ENCODE measurements at regions of chr17 and their contacts with region 1.

Region 1: GRCh38 chr17:28227316-28228125 is 91.5 kb upstream of the TMEM97 start:
- DNase-seq: peak in 1 of 4 experiments; percentile 25
- ATAC-seq: no peak
- H3K4me3 ChIP-seq: no peak overlapping the region
- H3K27ac ChIP-seq: no peak overlapping the region
- H3K4me1 ChIP-seq: peaks cover 14 to 43% of the 10 kb centered on the region in 2 experiments; a peak in 4 of 5 replicates
- H3K27me3 ChIP-seq: no peaks in the 10 kb centered on the region; a peak in 1 of 5 replicates
- CTCF ChIP-seq: no peak
- EP300 ChIP-seq: no peak
- POLR2A ChIP-seq: no peak
- RAD21 ChIP-seq: no peak

Region 2: DNA sequence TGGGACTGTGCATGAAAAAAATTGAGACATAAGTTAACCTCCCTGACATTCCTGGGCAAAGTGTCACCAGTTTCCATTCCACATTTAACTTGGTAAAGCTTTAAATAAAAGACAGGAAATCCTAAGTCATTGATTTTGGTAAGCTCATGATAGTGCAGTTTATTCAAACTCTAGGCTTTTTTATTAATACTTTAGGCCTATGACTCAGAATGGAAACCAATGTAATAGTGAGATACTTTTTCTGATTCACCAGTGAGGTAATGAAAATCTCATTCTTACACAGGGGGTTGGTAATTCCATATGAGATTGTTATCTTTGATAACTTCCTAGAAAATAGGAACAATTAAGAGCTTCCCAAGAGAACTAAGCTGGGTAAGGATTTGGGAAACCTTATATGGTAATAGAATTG is 94.0 kb before region 1 on chr17:
- CTCF ChIA-PET with region 1: no interaction called
- POLR2A ChIA-PET with region 1: no interaction called
- in situ Hi-C with region 1: no loop called
- intact Hi-C with region 1: no loop called
- DNase-seq: no peak
- ATAC-seq: no peak
- H3K4me3 ChIP-seq: no peak overlapping the region
- H3K27ac ChIP-seq: no peak overlapping the region
- H3K4me1 ChIP-seq: no peaks in the 10 kb centered on the region
- H3K27me3 ChIP-seq: no peaks in the 10 kb centered on the region
- CTCF ChIP-seq: no peak
- EP300 ChIP-seq: no peak
- POLR2A ChIP-seq: no peak
- RAD21 ChIP-seq: no peak

Region 3: GRCh38 chr17:28174352-28174964 is 53.1 kb before region 1 on chr17:
- CTCF ChIA-PET with region 1: no interaction called
- POLR2A ChIA-PET with region 1: no interaction called
- in situ Hi-C with region 1: no loop called
- intact Hi-C with region 1: loop called (anchors 10 kb)
- DNase-seq: no peak
- ATAC-seq: no peak
- H3K4me3 ChIP-seq: no peak overlapping the region
- H3K27ac ChIP-seq: no peak overlapping the region
- H3K4me1 ChIP-seq: peaks cover 8 to 31% of the 10 kb centered on the region in 2 experiments; a peak in 4 of 5 replicates
- H3K27me3 ChIP-seq: no peaks in the 10 kb centered on the region
- CTCF ChIP-seq: no peak
- EP300 ChIP-seq: no peak
- POLR2A ChIP-seq: no peak
- RAD21 ChIP-seq: no peak

Region 4: GRCh38 chr17:28467456-28468025 is 240.0 kb after region 1 on chr17:
- CTCF ChIA-PET with region 1: no interaction called
- POLR2A ChIA-PET with region 1: no interaction called
- in situ Hi-C with region 1: no loop called
- intact Hi-C with region 1: no loop called
- DNase-seq: no peak
- ATAC-seq: no peak
- H3K4me3 ChIP-seq: no peak overlapping the region
- H3K27ac ChIP-seq: no peak overlapping the region
- H3K4me1 ChIP-seq: peaks cover 5 to 9% of the 10 kb centered on the region in 2 experiments; a peak in 3 of 5 replicates
- H3K27me3 ChIP-seq: peaks cover 31 to 66% of the 10 kb centered on the region in 2 experiments
- CTCF ChIP-seq: no peak
- EP300 ChIP-seq: no peak
- POLR2A ChIP-seq: no peak
- RAD21 ChIP-seq: no peak

Measured in K562 (cell line).